Activated CD8-positive, alpha-beta T cell treated with anti-CD3 and anti-CD28 coated beads, Interleukin-2, amount 10 ng/mL, durations not matched to agents 7 days and 5 days (primary cell): ENCODE measurements at regions of chr19 and their contacts with region 1.

Region 1: GRCh38 chr19:45886427-45887199 is 672 bp upstream of the IRF2BP1 start:
- DNase-seq: peak; percentile 96
- ATAC-seq: peak; percentile 82
- H3K4me3 Mint-ChIP-seq: peak overlapping the region; percentile 90
- H3K27ac Mint-ChIP-seq: peak overlapping the region; percentile 97
- H3K4me1 Mint-ChIP-seq: peaks cover 29% of the 10 kb centered on the region
- H3K27me3 Mint-ChIP-seq: no peaks in the 10 kb centered on the region

Region 2: GRCh38 chr19:45876411-45877197 is 10.0 kb before region 1 on chr19:
- CTCF ChIA-PET with region 1: no interaction called
- POLR2A ChIA-PET with region 1: no interaction called
- DNase-seq: no peak
- ATAC-seq: peak; percentile 34
- H3K4me3 Mint-ChIP-seq: no peak overlapping the region
- H3K27ac Mint-ChIP-seq: no peak overlapping the region
- H3K4me1 Mint-ChIP-seq: peaks cover 18% of the 10 kb centered on the region
- H3K27me3 Mint-ChIP-seq: peaks cover 34% of the 10 kb centered on the region

Region 3: DNA sequence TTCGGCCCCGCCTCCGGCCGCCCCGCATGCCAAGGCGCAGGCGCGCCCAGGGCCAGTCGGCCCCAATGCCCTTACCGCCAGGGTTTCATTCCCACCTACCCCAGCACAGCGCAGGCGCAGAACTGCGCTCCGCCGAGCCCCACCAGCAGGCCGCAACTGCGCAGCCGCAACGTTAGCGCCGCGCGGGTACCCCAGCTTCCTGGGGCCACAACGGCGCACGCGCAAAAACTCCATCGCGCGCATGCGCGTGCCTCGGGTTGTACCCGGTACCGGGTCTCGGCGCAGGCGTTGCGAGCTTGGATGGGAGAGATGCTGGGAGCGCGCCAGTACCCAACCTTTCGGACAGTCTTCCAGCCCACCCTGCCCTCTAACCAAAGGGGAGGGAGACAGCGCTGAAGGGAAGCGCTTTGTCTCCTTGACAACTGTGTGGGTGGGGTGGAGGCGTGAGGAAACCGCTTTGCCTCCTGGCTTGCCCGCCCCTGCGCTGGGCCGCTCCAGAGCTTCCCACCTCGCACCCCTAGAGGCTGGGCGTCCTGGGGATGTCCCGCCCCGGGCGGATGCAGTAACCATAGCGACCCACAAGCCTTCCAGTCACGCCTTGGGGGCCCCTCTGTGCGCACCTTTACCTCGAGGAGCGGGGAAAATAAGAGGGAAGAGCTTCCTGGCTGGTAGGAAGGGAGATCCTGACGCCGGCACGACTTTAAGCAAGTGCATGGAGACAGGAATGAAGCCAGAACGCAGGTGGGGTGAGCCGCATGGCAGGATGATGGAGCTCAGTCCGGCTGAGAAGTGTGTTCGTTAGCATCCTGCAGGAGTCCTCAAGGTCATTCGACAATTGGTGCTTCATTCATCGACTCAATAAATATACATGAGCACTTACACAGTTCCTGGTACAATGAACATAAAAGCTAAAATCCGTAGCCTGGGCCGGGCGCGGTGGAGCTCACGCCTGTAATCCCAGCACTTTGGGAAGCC is 16.3 kb after region 1 on chr19:
- CTCF ChIA-PET with region 1: interaction called, 26 read pairs
- POLR2A ChIA-PET with region 1: interaction called, 12 read pairs
- DNase-seq: peak; percentile 99
- ATAC-seq: peak; percentile 89
- H3K4me3 Mint-ChIP-seq: peak overlapping the region; percentile 92
- H3K27ac Mint-ChIP-seq: peak overlapping the region; percentile 77
- H3K4me1 Mint-ChIP-seq: peaks cover 28% of the 10 kb centered on the region
- H3K27me3 Mint-ChIP-seq: peaks cover 8% of the 10 kb centered on the region